ENCODE measurements at regions of chr1 and their contacts with region 1.

Region 1: DNA sequence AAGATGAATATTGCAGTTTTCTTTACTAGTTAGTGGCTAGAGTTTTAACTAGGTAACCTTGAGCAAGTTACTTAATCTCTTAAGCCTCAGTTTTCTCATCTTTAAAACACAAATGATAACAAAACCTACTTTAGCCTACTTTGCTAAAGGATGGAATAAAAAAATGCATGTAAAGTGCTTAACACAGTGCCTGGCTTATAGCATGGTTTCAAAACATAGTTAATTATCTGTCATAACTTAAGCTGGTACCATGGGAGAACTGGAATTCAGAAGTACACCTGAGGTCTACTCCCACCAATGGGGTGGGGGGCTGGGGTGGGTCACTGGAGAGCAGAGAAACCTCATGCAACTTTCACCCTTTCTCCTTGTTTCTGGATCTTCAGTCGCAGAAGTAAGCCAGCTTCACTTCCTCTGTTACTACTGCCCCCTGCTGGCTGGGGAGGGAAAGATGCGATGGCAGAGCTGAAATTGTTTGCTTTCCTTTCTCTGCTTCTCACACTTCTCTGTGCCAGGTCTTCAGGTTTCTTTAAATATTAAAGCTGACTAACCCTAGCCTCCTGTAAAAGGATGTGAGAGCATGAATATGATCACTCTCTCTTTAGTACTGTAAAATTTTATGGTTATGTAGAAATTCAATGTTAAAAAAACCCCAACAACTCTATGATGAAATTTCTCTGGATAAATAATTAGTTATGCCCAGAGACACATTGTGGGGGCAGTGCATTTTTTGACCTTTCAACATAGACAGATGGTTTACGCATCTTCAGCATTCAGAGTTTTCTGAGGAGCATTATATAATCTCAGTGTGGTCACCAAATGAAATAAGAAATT is 324.2 kb downstream of the HLX start:
- DNase-seq: peak; percentile 78
- H3K4me3 ChIP-seq: no peak overlapping the region
- H3K27ac ChIP-seq: no peak overlapping the region
- H3K4me1 ChIP-seq: peaks cover 4% of the 10 kb centered on the region; the same call in 1 of the 2 replicates
- H3K27me3 ChIP-seq: no peaks in the 10 kb centered on the region

Region 2: DNA sequence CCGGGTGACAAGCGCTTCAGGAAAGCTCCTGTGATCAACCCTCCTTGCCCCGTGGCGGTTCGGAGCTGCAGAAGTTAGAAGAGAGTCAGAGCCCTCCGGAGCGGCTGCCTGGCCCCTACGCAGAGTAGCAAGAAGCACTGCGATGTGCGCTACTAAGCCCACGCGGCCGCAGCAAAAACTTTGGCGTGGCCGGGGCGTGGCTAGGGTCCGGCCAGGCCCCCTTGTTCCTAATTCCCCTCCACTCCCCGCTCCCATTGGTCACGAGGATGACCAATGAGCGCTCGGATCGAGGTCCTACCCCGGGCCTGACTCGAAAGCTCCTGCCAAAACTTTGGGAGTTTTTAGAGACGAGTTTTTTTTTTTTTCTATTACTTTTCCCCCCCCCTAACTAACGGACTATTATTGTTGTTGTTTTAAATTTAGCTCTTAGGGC is 324.3 kb before region 1 on chr1 and contains the start of gene HLX:
- in situ Hi-C with region 1: loop called (anchors 10 kb)
- DNase-seq: peak; percentile 98
- H3K4me3 ChIP-seq: peak within 1 kb of the TSS; percentile 96
- H3K27ac ChIP-seq: peak within 1 kb of the TSS; percentile 86
- H3K4me1 ChIP-seq: peaks cover 11% of the 10 kb centered on the region
- H3K27me3 ChIP-seq: no peaks in the 10 kb centered on the region
- total RNA-seq, gene HLX: 14.0 and 24.2 TPM in 2 replicates

Measured in GM23248 (cell line).